ENCODE measurements at regions of chr16 and their contacts with region 1.

Region 1: GRCh38 chr16:87463722-87464690 is 28.8 kb downstream of the ZCCHC14 start:
- DNase-seq: peak; percentile 31
- H3K4me3 ChIP-seq: no peak overlapping the region
- H3K27ac ChIP-seq: peak overlapping the region; percentile 84 to 96 (median 89)
- H3K4me1 ChIP-seq: peaks cover 33 to 69% (median 48%) of the 10 kb centered on the region in 4 donors
- H3K27me3 ChIP-seq: no peaks in the 10 kb centered on the region
- CTCF ChIP-seq: no peak
- EP300 ChIP-seq: no peak
- POLR2A ChIP-seq: no peak

Region 2: DNA sequence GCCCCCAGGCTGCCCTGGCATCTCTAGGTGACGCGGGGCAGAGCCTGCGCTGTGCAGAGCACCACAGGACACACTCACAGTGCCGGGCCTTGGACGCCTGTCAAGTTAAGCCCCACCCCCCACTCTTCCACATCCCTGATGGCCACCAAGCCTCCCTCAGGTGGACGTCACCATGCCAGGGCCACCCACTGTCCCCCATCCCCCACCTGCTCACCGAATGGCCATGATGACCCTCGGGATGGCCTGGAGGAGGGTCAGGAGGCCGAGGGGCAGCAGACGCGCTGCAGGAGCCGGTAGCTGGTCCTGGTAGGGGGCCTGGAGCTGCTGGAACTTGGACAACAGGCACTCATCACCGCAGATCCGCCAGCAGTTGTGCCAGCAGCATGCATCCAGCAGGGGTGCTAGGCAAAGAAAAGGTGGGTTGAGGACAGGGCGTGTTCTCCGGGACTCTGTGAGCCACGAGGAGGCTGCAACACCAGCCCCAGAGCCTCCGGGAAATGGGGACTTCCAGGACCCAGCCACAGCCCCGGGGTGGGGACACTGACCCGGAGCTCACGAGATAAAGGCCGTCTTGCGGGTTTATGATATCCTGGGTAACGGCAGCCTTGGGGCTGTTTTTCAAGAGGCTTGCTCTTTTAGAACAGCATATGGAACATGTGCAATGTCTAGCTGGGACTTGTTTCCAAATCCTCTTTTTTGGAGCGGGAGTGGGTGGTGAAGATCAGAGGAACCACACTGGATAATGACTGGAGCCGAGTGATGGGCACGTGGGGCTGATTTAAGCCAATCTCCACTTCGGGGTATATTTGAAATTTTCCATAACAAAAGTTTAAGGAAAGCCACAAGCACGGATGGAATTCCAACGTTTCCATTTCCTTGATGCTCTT is 158.3 kb before region 1 on chr16:
- in situ Hi-C with region 1: no loop called
- intact Hi-C with region 1: no loop called
- DNase-seq: no peak
- H3K4me3 ChIP-seq: no peak overlapping the region
- H3K27ac ChIP-seq: no peak overlapping the region
- H3K4me1 ChIP-seq: peaks cover 0 to 6% (median 0%) of the 10 kb centered on the region in 4 donors
- H3K27me3 ChIP-seq: no peaks in the 10 kb centered on the region
- CTCF ChIP-seq: peak in 1 of 5 experiments; percentile 23
- EP300 ChIP-seq: no peak
- POLR2A ChIP-seq: no peak

Region 3: DNA sequence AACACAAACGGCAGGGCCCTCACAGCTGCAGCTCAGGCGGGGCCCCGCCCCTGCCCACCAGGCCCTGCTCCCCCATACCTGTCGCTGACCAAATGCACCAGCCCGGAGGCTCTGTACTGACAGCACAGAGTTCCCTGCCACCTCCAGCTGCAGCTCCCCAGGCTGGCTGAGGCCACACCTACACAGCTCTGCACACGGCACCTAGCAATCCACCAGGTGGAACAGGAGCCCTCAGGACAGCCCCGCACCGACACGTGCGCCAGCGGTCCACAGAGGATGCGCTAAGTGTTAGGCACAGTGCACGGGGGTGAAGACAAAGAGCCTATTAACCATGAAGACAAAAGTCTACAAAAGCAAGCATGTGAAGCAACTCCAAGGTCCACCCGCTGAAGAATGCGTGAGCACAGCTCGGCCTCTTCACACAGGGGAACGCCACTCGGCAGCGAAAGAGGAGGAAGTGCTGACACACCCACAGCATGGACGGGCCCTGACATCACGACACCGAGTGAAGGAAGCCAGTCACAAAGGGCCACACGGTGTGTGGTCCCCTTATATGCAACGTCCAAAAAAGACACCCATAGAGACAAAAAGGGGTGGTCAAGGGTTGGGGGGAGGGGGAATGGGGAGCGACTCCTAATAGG is 23.5 kb after region 1 on chr16:
- in situ Hi-C with region 1: no loop called
- intact Hi-C with region 1: loop called (anchors 1 kb)
- DNase-seq: peak; percentile 85
- H3K4me3 ChIP-seq: peak overlapping the region in 2 of 4 donors; percentile 7 to 36
- H3K27ac ChIP-seq: peak overlapping the region; percentile 43 to 74 (median 74)
- H3K4me1 ChIP-seq: peaks cover 42 to 85% (median 64%) of the 10 kb centered on the region in 4 donors
- H3K27me3 ChIP-seq: no peaks in the 10 kb centered on the region
- CTCF ChIP-seq: no peak
- EP300 ChIP-seq: no peak
- POLR2A ChIP-seq: no peak